Esophagus muscularis mucosa (tissue), 4 donors: ENCODE measurements at regions of chr2 and their contacts with region 1.

Region 1: DNA sequence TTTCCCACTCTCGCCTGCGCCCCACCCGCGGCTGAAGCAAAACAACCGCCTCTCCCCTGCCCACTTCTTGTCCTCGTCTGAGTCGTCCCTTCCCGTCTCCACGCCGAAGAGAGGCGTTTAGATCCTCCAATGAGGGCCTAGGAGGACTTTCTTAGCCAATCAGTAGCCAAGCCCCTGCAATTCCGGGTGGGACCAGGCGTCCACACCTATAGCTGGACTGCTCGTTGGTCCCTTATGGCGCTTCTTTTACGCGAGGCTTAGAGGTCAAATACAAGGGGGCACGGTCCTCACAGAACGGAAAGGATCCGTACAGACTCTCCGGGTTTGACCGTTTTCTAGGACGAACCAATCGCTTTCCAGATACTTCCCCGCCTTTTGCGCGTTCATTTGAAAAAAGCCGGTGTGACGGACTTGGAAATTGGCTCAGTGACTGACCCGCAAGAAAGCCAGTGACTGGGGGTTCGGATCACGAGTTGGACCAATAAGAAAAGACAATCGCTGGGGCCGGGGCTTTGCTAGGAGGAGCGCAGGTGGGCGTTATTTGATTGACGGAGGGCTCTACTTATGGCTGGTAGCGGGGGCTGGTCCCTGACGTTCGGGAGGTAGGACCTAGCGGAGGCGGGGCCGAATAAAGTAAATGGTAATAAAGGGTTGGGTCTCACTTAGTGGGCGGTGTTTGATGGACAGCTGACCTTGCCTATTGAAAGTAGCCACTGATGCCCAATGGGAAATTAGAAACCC is 565 bp upstream of the PPM1B start:
- DNase-seq: peak; percentile 100
- H3K4me3 ChIP-seq: peak overlapping the region; percentile 58 to 97 (median 72)
- H3K27ac ChIP-seq: peak overlapping the region; percentile 92 to 95 (median 92)
- H3K4me1 ChIP-seq: peaks cover 16 to 32% (median 26%) of the 10 kb centered on the region in 4 donors
- H3K27me3 ChIP-seq: peaks cover 0 to 5% (median 0%) of the 10 kb centered on the region in 4 donors
- CTCF ChIP-seq: peak in 1 of 3 experiments; percentile 3
- EP300 ChIP-seq: no peak
- POLR2A ChIP-seq: peak; percentile 7

Region 2: DNA sequence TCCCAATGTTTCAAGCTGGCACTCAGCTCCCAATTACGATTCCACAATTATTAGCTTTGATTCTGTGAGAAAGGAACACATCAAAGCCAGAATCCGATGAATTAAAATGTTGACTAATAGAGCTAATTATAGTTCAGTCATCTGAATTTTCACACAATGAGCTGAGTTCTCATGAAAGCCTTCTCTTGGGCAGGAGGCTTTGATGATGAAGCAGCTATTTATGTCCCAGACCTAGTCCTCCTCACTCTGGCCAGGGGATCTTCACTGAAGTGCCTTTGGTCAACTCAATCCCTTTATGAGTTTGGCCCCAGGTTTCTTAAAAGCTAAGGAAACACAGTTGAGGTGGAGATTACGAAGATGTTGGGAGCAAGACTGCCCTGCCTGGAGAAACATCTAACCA is 74.1 kb before region 1 on chr2:
- intact Hi-C with region 1: loop called (anchors 5 kb)
- DNase-seq: no peak
- H3K4me3 ChIP-seq: no peak overlapping the region
- H3K27ac ChIP-seq: no peak overlapping the region
- H3K4me1 ChIP-seq: no peaks in the 10 kb centered on the region
- H3K27me3 ChIP-seq: no peaks in the 10 kb centered on the region
- CTCF ChIP-seq: no peak
- EP300 ChIP-seq: no peak
- POLR2A ChIP-seq: no peak

Region 3: DNA sequence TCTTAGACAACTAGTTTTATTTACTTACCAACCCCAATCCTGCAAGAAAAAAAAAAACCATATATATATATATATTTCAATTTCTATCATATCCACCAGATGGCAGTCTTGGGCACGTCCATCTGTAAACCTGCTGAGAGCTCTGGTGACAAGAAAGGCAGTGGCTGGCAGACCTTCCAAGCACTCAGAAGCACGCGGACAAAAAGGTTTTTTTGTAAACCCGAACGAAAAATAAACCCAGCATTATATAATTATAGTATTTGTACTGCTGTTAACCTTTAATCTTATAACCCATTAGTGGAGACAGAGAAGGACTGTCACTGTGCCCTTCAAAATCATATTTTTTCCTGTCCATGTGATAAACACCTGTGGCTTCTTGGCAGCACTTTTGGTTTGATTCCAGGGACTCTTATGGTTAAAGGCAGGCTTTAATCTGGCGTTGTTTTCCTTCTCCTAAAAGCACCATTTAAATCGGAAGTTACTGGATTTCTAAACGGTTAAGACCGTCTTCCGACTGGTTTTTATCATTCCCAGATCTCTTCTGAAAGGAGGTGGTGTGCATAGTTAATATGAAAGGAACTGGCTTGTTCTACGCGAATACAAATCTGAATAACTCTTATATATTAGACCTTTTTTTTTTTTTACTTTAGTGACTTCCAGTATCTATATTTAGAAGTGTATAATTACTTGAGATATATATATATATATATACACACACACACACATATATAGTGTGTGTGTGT is 76.2 kb after region 1 on chr2:
- intact Hi-C with region 1: no loop called
- DNase-seq: no peak
- H3K4me3 ChIP-seq: peak overlapping the region; percentile 32 to 47 (median 38)
- H3K27ac ChIP-seq: no peak overlapping the region
- H3K4me1 ChIP-seq: peaks cover 0 to 17% (median 10%) of the 10 kb centered on the region in 4 donors
- H3K27me3 ChIP-seq: no peaks in the 10 kb centered on the region
- CTCF ChIP-seq: peak; percentile 61 to 62 (median 61)
- EP300 ChIP-seq: no peak
- POLR2A ChIP-seq: no peak

Region 4: DNA sequence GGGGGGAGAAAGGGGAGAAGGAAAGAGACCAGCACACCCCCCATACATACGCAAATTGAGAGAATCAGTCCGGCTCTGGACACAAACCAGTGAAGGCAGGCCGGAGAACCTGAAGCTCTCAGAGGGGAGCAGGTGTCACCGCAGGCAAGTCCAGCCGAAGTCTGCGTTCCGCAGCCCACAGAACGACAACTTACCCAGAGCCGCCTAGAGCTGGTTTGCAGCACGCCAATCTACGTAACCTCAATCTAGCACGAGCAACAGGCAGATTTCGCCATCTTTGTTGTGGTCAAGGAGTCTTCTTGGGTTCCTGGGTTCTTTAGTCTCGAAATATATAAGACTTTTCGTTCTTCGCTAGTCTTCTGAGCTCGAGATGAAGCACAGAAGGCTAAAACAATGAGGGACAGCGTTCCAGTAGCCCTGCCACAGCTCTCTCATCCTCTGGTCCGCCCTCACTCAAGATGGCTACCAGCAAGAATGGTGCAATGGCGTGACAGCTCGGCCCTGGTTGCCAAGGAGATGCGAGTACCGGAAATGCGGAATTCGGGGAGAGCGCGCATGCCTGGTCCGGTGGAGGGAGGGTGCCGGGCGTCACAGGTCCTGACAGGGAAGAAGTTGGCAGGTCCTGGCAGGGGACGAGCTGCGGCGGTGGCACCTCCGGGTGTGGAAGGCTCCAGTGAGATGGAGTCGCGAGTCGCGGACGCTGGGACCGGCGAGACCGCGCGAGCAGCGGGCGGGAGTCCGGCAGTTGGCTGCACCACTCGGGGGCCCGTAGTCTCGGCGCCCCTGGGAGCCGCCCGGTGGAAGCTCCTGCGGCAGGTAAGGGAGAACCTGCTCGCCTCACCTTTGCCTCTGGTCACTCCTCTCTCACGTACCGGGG is 193.5 kb after region 1 on chr2 and contains the starts of genes CAMKMT and PREPL:
- intact Hi-C with region 1: loop called (anchors 5 kb)
- DNase-seq: peak; percentile 100
- H3K4me3 ChIP-seq: peak within 1 kb of the TSS; percentile 79 to 93 (median 84)
- H3K27ac ChIP-seq: peak within 1 kb of the TSS; percentile 88 to 96 (median 94)
- H3K4me1 ChIP-seq: peaks cover 33 to 49% (median 47%) of the 10 kb centered on the region in 4 donors
- H3K27me3 ChIP-seq: no peaks in the 10 kb centered on the region
- CTCF ChIP-seq: no peak
- EP300 ChIP-seq: no peak
- POLR2A ChIP-seq: peak; percentile 73
- total RNA-seq, gene CAMKMT: 5.8 to 8.3 (median 6.9) TPM
- total RNA-seq, gene PREPL: 33.6 to 38.6 (median 35.3) TPM